ENCODE measurements at regions of chr19 and their contacts with region 1.

Region 1: DNA sequence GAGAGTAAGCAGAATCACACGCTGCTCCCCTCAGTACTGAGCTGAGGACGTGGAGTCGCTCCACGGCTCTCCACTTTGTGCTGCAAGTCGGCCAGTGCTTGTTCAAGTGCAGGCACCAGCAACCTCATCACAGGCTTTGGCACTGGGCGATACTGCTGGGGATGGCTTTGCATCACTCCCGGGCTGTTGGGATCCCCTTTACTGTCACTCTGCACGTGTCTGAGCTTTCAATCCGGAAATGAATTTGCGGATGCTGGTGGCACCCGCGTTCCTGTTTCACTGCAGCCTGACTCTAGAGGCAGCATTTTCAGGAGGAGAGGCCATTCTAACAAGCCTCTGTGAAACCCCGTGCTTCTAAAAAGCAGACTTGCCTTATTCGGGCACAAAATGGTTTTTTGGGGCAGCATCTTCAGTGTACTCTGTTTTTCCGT is 19.1 kb downstream of the SMARCA4 start:
- DNase-seq: no peak
- H3K4me3 ChIP-seq: no peak overlapping the region
- H3K27me3 ChIP-seq: no peaks in the 10 kb centered on the region
- CTCF ChIP-seq: no peak

Region 2: GRCh38 chr19:10966809-10967208 is 13.2 kb before region 1 on chr19:
- CTCF ChIA-PET with region 1: interaction called, 5 read pairs
- POLR2A ChIA-PET with region 1: interaction called, 10 read pairs
- DNase-seq: no peak
- H3K4me3 ChIP-seq: no peak overlapping the region
- H3K27me3 ChIP-seq: no peaks in the 10 kb centered on the region
- CTCF ChIP-seq: no peak

Region 3: GRCh38 chr19:11041966-11042627 is 62.1 kb after region 1 on chr19:
- CTCF ChIA-PET with region 1: no interaction called
- POLR2A ChIA-PET with region 1: no interaction called
- DNase-seq: no peak
- H3K4me3 ChIP-seq: no peak overlapping the region
- H3K27me3 ChIP-seq: no peaks in the 10 kb centered on the region
- CTCF ChIP-seq: no peak

Measured in BJ (cell line).